A673 (cell line): ENCODE measurements at regions of chr5 and their contacts with region 1.

Region 1: DNA sequence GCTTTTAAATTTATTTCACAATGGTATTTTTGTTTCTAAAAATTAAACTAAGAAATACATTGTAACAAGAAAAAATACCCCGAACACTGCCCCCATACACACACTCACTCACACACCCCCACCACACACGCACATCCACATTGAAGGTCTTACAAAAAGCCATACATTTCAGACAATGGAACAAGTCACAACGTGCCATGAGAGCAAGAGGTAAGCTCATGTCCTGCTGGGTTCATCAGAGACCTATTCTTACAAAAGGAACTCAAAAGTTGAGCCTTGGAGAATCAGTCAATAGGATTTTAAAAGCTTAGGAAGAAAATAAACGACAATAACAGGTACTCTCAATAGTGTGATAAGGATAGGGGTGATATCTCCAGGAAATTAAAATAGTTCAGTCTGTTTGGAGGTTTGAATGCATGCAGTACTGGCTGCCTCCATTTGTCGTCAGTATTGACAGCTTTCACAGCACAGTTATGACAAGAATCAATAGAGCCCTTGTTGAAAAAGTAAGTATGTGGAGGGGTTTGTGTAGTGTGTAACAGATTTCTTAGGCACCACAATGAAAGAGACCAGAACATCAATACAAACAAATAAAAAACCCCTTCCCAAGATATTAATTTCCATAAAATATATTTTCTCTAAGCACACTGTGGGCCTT is 1826.2 kb upstream of the CDH6 start:
- DNase-seq: peak; percentile 31
- H3K4me3 ChIP-seq: no peak overlapping the region
- H3K27ac ChIP-seq: no peak overlapping the region
- H3K4me1 ChIP-seq: no peaks in the 10 kb centered on the region
- H3K27me3 ChIP-seq: no peaks in the 10 kb centered on the region
- CTCF ChIP-seq: peak; percentile 53

Region 2: DNA sequence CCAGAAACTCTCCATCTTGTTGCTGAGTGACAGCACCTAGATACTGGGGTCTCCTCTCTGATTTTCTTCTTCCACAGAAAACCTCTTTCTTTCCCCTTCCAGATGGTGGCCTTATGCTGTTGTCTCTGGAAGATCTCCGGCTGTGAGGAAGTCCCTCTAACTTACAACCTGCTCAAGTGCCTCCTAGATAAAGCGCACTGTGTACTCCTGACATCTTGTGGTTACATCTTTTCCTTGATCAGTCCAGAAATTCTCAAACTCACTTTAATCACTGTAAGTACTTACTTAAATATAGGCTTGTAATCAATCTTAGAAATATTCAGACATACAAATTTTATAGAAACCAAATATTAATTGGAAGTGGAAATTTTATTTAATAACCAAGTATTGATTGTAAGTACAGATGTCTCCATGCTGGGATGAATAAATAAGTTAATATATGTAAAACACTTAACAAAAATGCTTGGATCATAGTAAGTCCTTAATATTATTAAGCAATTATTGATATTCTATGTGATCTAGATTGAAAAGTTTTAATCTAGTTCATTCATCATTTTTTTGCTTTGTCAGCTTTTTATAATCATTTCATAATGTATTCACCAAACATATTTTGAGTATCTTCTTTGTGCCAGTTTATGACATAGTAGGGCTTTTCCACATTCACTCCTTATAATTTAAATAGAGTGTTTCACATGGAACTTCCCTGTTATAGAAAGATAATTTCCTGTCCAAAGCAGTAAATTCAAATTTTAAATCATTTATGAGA is 444.8 kb after region 1 on chr5:
- CTCF ChIA-PET with region 1: no interaction called
- POLR2A ChIA-PET with region 1: no interaction called
- intact Hi-C with region 1: loop called (anchors 10 kb)
- DNase-seq: peak; percentile 51
- H3K4me3 ChIP-seq: no peak overlapping the region
- H3K27ac ChIP-seq: no peak overlapping the region
- H3K4me1 ChIP-seq: no peaks in the 10 kb centered on the region
- H3K27me3 ChIP-seq: no peaks in the 10 kb centered on the region
- CTCF ChIP-seq: peak; percentile 42